PC-9 (cell line): ENCODE measurements at regions of chr1 and their contacts with region 1.

Region 1: DNA sequence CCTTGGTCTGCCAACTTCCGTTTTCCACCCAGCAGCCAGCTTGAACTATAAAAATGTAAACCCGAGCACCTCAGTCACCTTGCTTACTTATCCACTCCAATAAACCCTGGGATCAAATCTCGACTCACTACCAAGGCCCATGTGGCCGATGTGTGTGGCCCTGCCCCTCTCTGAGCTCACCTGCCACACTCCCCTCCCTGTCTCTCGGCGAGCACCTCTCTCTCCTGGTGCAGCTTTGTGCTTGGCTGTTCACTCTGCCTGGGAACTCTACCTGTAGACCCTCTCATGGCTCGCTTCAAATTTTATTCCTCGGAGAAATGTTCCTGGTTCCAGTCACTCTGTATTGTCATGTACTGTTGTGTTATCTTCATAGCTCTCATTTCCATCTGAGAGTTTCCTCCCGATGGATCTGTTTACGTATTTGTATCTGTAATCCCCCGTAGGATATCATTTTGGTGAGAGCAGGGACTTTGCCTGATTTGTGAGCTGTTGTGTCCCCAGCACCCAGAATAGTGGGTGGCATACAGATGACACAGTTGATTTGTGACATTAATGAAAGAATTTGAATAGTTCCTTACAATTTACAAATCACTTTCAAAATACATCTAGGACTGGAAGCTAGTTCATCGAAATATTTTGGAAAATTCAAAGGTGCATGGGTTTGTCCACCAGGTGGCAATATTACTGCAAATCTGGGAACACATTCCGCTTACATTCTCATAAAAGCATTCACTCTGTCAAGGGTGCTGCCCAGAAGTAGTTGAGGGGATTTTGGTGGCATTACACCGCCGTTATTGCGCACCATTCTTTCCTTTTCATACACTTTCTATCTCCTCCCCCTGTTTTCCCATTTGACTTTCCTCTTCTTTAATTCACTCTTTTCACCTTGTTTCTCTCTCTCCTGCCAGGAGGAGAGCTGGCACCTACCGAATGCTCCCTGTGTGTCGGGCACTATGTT is 95.3 kb downstream of the ABCA4 start:
- DNase-seq: peak; percentile 54 to 77
- H3K4me3 ChIP-seq: no peak overlapping the region
- H3K27ac ChIP-seq: no peak overlapping the region
- H3K4me1 ChIP-seq: peaks cover 49% of the 10 kb centered on the region
- H3K27me3 ChIP-seq: no peaks in the 10 kb centered on the region
- CTCF ChIP-seq: peak; percentile 91

Region 2: DNA sequence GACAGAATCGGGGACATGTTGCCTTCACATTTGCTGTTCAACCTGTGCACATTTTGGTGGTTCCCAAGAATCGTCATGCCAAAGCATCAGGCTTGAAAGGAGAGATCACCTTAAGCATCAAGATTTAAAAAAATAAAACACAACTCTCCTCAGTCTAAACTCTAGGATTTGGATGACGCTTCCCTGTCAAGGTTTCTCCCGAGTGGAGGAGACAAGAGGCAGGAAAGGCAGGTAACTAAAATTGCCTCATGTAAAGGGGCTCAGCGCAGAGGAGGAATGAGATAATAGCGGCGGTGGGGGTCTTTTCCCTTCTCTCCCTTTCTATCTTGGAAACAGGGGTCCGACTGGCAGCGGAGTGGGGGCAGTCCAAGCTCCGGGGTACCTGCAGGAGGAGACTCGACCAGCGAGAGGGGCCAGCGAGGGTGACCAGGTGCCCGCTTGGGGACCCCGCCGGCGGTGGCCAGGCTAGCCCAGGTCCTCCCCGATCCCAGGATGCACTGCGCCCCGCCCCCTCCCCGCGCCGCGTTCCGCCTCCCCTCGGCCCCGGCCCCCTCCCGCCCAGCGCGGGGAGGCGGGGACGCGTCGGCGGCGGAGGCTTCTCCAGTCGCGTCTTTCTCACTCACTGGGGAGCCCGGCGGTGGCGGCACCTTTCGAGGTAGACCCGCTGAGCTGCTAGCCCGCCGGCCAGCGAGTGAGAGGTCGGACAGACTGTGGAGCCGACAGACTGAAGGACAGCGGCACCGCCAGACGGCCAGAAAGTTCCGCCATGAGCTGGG is 578.0 kb before region 1 on chr1 and contains the start of gene FNBP1L:
- CTCF ChIA-PET with region 1: no interaction called
- POLR2A ChIA-PET with region 1: no interaction called
- intact Hi-C with region 1: loop called (anchors 10 kb)
- DNase-seq: peak; percentile 76 to 86
- H3K4me3 ChIP-seq: peak within 1 kb of the TSS; percentile 90
- H3K27ac ChIP-seq: peak within 1 kb of the TSS; percentile 44
- H3K4me1 ChIP-seq: peaks cover 28% of the 10 kb centered on the region
- H3K27me3 ChIP-seq: no peaks in the 10 kb centered on the region
- CTCF ChIP-seq: no peak
- total RNA-seq, gene FNBP1L: 34.1 and 34.3 TPM in 2 replicates

Region 3: GRCh38 chr1:93988634-93989350 is 36.9 kb before region 1 on chr1:
- CTCF ChIA-PET with region 1: interaction called, 13 read pairs
- POLR2A ChIA-PET with region 1: interaction called, 55 read pairs
- intact Hi-C with region 1: loop called (anchors 1 kb)
- DNase-seq: peak; percentile 84 to 100
- H3K4me3 ChIP-seq: peak overlapping the region; percentile 25; the same call in 1 of the 2 replicates
- H3K27ac ChIP-seq: peak overlapping the region; percentile 95
- H3K4me1 ChIP-seq: peaks cover 61% of the 10 kb centered on the region
- H3K27me3 ChIP-seq: no peaks in the 10 kb centered on the region
- CTCF ChIP-seq: no peak

Region 4: GRCh38 chr1:94191216-94191615 is 165.6 kb after region 1 on chr1:
- CTCF ChIA-PET with region 1: no interaction called
- POLR2A ChIA-PET with region 1: no interaction called
- intact Hi-C with region 1: no loop called
- DNase-seq: no peak
- H3K4me3 ChIP-seq: no peak overlapping the region
- H3K27ac ChIP-seq: peak overlapping the region; percentile 40
- H3K4me1 ChIP-seq: peaks cover 3% of the 10 kb centered on the region; the same call in 1 of the 2 replicates
- H3K27me3 ChIP-seq: no peaks in the 10 kb centered on the region
- CTCF ChIP-seq: no peak

Region 5: DNA sequence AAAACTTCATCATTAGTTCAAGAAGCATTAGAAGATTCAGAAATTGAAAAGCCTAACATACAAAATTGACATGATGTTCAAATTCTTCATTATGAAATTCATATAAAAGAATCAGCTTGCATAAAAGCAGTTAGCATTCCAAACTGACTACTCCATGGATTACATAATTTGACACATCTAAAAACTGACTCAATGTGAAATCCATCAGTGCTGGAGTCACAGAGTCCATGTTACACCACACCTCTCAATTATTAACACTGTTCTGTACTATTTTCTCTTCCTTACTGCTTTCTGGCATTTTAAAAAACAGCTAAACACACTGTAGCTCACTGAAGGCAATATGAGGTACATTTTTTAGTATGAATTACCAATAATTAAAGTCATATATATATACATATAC is 183.8 kb after region 1 on chr1:
- CTCF ChIA-PET with region 1: no interaction called
- POLR2A ChIA-PET with region 1: interaction called, 16 read pairs
- intact Hi-C with region 1: no loop called
- DNase-seq: peak in 1 of 2 experiments; percentile 80
- H3K4me3 ChIP-seq: no peak overlapping the region
- H3K27ac ChIP-seq: peak overlapping the region; percentile 35
- H3K4me1 ChIP-seq: peaks cover 6% of the 10 kb centered on the region
- H3K27me3 ChIP-seq: no peaks in the 10 kb centered on the region
- CTCF ChIP-seq: no peak

Region 6: GRCh38 chr1:94471271-94471670 is 445.6 kb after region 1 on chr1:
- CTCF ChIA-PET with region 1: interaction called, 12 read pairs
- POLR2A ChIA-PET with region 1: no interaction called
- intact Hi-C with region 1: no loop called
- DNase-seq: no peak
- H3K4me3 ChIP-seq: no peak overlapping the region
- H3K27ac ChIP-seq: no peak overlapping the region
- H3K4me1 ChIP-seq: no peaks in the 10 kb centered on the region
- H3K27me3 ChIP-seq: no peaks in the 10 kb centered on the region
- CTCF ChIP-seq: no peak